ENCODE measurements at regions of chr16 and their contacts with region 1.

Region 1: DNA sequence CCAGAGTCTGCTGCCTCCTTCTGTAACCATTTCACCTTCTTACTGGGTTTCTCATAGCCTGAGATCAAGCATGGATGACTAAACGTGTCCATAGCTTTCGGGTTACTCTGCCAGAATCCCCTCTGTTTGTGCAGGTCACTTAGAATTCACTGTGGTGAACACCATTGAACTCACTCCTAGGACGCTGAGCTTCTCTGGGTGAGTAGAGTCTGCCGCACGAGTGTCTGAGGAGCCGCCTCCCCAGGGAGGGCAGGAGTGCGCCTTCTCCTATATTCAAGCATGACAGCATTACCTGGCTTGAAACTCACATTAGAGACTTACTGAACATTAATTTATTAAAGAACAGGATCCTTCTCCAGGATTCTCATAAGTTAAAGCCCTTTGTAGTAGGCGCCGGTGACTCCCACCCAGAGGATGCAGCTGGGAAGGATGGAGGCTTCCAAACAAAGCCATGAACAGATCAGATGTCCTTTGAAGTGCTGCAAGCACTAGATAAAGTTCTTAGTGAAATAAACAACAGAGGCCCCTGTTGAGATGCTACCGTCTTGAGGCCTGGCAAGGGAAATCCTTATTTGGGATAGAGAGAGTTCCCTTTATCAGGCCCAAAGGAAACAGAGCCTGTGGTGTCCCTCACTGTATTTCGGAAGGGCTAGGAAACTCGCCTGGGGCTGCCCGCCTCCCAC is 144.6 kb upstream of the PLCG2 start:
- DNase-seq: no peak
- ATAC-seq: no peak

Region 2: DNA sequence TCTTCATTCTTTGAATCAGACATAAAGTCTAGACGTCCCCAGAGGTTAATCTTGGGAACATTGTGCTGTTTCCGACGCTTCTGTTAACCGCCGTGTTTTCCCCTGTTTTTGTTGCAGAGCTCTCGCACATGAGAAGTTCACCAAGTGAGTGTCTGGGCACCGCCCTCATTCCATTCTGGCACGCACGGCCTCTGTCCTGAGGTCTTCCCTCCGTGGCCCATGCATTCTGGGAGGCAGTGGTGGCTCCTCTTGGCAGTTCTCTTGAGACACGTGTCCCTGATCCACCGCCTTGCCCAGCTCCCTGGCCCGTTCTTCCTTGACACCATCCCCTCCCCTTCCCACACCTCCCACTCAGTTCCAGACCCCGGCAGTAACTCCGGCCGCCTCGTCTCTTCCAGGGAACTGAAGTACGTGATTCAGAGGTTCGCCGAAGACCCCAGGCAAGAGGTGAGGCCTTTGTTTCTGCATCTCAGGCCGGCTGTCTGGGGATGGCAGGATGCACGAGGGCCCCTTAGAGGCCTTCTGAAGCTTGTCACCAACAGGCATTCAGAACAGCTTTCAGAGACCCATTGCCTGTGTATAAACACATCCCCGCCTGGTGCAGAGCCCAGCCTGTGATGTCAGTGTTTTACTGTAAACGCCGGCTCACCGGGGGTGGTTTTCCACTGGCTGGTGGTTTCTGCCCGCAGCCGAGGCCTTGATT is 58.7 kb after region 1 on chr16:
- intact Hi-C with region 1: loop called (anchors 5 kb)
- DNase-seq: peak; percentile 36
- ATAC-seq: no peak

Region 3: GRCh38 chr16:82061861-82062525 is 427.5 kb after region 1 on chr16:
- intact Hi-C with region 1: no loop called
- DNase-seq: no peak
- ATAC-seq: no peak